ENCODE measurements at regions of chr2 and their contacts with region 1.

Region 1: GRCh38 chr2:80499095-80499494 is 194.5 kb upstream of the LRRTM1 start:
- DNase-seq: peak; percentile 59
- H3K4me3 Mint-ChIP-seq: no peak overlapping the region
- H3K27ac Mint-ChIP-seq: no peak overlapping the region
- H3K4me1 Mint-ChIP-seq: peaks cover 13% of the 10 kb centered on the region
- H3K27me3 Mint-ChIP-seq: no peaks in the 10 kb centered on the region
- CTCF ChIP-seq: peak; percentile 58

Region 2: GRCh38 chr2:79935771-79936657 is 563.1 kb before region 1 on chr2:
- CTCF ChIA-PET with region 1: interaction called, 3 read pairs
- POLR2A ChIA-PET with region 1: no interaction called
- intact Hi-C with region 1: loop called (anchors 5 kb)
- DNase-seq: peak; percentile 76
- H3K4me3 Mint-ChIP-seq: peak overlapping the region; percentile 69
- H3K27ac Mint-ChIP-seq: peak overlapping the region; percentile 37
- H3K4me1 Mint-ChIP-seq: peaks cover 11% of the 10 kb centered on the region
- H3K27me3 Mint-ChIP-seq: peaks cover 12% of the 10 kb centered on the region
- CTCF ChIP-seq: peak; percentile 65

Region 3: DNA sequence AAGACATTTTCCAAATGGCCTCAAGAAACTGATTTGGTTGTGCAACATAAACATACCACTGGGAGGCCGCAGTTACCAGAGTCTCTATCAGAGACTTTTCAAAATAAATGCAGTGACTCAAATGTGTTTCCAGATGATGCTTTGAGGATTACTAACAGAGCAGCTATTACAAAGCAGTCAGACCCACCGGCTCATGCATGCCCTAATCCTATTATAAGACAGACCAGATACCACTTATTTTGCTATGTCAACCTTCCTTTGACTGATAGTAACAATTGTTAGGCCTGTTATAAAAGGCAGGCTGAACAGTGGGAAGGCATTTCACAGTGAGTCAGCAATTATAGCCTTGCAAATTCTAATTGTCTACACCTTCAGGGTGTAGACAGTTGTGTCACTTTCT is 412.3 kb before region 1 on chr2:
- CTCF ChIA-PET with region 1: no interaction called
- POLR2A ChIA-PET with region 1: no interaction called
- intact Hi-C with region 1: loop called (anchors 5 kb)
- DNase-seq: peak; percentile 56
- H3K4me3 Mint-ChIP-seq: no peak overlapping the region
- H3K27ac Mint-ChIP-seq: no peak overlapping the region
- H3K4me1 Mint-ChIP-seq: peaks cover 8% of the 10 kb centered on the region
- H3K27me3 Mint-ChIP-seq: no peaks in the 10 kb centered on the region
- CTCF ChIP-seq: no peak

Region 4: GRCh38 chr2:80255918-80256781 is 242.9 kb before region 1 on chr2:
- CTCF ChIA-PET with region 1: no interaction called
- POLR2A ChIA-PET with region 1: no interaction called
- intact Hi-C with region 1: loop called (anchors 2 kb)
- DNase-seq: peak; percentile 52
- H3K4me3 Mint-ChIP-seq: no peak overlapping the region
- H3K27ac Mint-ChIP-seq: no peak overlapping the region
- H3K4me1 Mint-ChIP-seq: peaks cover 6% of the 10 kb centered on the region
- H3K27me3 Mint-ChIP-seq: no peaks in the 10 kb centered on the region
- CTCF ChIP-seq: peak; percentile 30

Region 5: GRCh38 chr2:80293039-80293438 is 206.1 kb before region 1 on chr2:
- CTCF ChIA-PET with region 1: no interaction called
- POLR2A ChIA-PET with region 1: no interaction called
- intact Hi-C with region 1: no loop called
- DNase-seq: no peak
- H3K4me3 Mint-ChIP-seq: no peak overlapping the region
- H3K27ac Mint-ChIP-seq: no peak overlapping the region
- H3K4me1 Mint-ChIP-seq: no peaks in the 10 kb centered on the region
- H3K27me3 Mint-ChIP-seq: no peaks in the 10 kb centered on the region
- CTCF ChIP-seq: no peak

Region 6: GRCh38 chr2:80326214-80326613 is 172.9 kb before region 1 on chr2:
- CTCF ChIA-PET with region 1: interaction called, 84 read pairs
- POLR2A ChIA-PET with region 1: interaction called, 4 read pairs
- intact Hi-C with region 1: loop called (anchors 1 kb)
- DNase-seq: peak; percentile 53
- H3K4me3 Mint-ChIP-seq: no peak overlapping the region
- H3K27ac Mint-ChIP-seq: no peak overlapping the region
- H3K4me1 Mint-ChIP-seq: peaks cover 2% of the 10 kb centered on the region
- H3K27me3 Mint-ChIP-seq: no peaks in the 10 kb centered on the region
- CTCF ChIP-seq: peak; percentile 51

Measured in MCF 10A (cell line).